Activated T-helper 2 cell treated with anti-CD3 and anti-CD28 coated beads, Interferon-gamma antibody, Interleukin-2, Interleukin-4, amounts not matched to agents 10 μg/mL and 5 μg/mL and 100 μg/mL, durations not matched to agents 14 hours and 24 hours and 36 hours (primary cell): ENCODE measurements at regions of chr14 and their contacts with region 1.

Region 1: GRCh38 chr14:60753264-60754119 is 18.9 kb downstream of the MNAT1 start:
- DNase-seq: peak; percentile 67
- H3K4me3 Mint-ChIP-seq: peak overlapping the region; percentile 37
- H3K27ac Mint-ChIP-seq: peak overlapping the region; percentile 87
- H3K4me1 Mint-ChIP-seq: peaks cover 57% of the 10 kb centered on the region
- H3K27me3 Mint-ChIP-seq: no peaks in the 10 kb centered on the region

Region 2: DNA sequence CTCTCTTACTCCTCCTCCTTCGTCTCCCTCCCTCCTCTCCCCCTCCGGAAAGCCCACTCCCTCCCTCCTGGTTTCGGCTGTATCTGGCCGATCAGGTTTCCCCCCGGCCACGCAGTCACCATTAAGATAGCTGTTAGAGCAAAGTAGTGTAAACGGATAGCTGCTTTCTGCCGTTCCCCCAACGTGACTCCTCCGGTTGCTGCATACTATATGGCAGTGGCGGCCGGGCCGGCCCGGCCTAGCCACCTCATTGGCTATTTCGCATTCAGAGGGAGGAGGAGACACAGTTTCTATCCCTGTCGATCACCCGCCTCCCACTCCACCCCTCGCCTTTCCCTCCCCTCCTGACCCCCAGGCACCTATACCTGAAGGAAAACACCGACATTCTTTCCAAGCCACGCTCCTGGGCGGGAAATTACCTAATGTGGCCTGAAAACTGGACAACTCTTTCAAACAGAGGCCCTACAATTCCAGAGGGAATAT is 29.3 kb before region 1 on chr14 and contains the start of gene SIX4:
- intact Hi-C with region 1: loop called (anchors 1 kb)
- DNase-seq: no peak
- H3K4me3 Mint-ChIP-seq: peak within 1 kb of the TSS; percentile 83
- H3K27ac Mint-ChIP-seq: peak within 1 kb of the TSS; percentile 20
- H3K4me1 Mint-ChIP-seq: peaks cover 15% of the 10 kb centered on the region
- H3K27me3 Mint-ChIP-seq: peaks cover 72% of the 10 kb centered on the region
- total RNA-seq, gene SIX4: 1.1 and 1.3 TPM in 2 replicates

Region 3: DNA sequence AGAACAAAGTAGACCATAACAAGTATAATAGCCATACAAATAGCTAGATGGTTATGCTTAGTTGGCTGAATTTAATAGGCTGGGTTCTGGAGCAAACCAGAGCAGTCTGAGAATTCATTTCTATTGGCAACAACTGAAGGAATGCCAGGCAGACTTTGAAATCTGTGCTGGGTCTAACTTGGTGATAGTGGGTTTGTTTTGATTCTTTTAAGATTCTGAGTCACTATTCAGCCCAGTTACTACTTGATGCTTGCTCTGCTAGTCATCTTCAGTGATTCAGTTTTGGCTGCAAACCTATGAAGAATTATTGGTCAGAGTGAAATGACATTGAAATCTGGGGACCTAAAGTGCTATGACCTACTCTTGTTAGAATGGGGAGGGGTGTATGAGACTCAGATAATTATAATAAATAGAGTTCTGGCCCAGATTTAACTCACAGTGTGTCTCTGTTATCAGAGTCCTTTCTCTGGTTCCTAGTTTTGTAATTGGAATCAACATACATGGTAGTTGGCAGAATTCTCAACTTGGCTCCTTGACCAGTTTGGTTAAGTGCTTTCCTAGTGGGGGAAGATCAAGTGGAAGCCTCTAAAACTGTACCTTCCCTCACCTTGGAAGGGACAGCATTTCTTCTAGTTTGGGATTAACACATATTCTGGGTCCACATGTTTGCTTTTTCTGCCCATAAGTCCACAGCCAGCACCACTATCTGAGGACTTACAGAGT is 24.5 kb after region 1 on chr14:
- intact Hi-C with region 1: loop called (anchors 1 kb)
- DNase-seq: no peak
- H3K4me3 Mint-ChIP-seq: no peak overlapping the region
- H3K27ac Mint-ChIP-seq: no peak overlapping the region
- H3K4me1 Mint-ChIP-seq: peaks cover 21% of the 10 kb centered on the region
- H3K27me3 Mint-ChIP-seq: no peaks in the 10 kb centered on the region

Region 4: DNA sequence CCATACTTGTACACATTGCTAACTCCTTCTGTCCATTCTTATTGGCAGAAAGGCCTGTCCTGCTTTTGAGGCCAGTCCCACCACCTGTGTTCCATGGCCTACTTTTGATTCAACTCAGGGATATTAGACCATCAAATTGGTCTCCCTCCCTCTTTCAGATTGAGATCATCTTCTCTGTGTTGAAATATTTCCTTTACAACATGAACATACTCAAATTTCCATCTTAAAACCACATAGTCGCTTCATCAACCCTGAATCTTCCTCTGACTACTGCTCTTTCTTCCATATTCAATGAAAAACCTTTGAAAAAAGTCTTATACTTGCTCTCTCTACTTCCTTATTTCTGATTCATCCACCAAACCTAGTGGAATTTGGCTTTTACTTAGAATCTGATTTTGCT is 192.5 kb after region 1 on chr14:
- intact Hi-C with region 1: loop called (anchors 5 kb)
- DNase-seq: no peak
- H3K4me3 Mint-ChIP-seq: no peak overlapping the region
- H3K27ac Mint-ChIP-seq: peak overlapping the region; percentile 67
- H3K4me1 Mint-ChIP-seq: peaks cover 13% of the 10 kb centered on the region
- H3K27me3 Mint-ChIP-seq: no peaks in the 10 kb centered on the region

Region 5: DNA sequence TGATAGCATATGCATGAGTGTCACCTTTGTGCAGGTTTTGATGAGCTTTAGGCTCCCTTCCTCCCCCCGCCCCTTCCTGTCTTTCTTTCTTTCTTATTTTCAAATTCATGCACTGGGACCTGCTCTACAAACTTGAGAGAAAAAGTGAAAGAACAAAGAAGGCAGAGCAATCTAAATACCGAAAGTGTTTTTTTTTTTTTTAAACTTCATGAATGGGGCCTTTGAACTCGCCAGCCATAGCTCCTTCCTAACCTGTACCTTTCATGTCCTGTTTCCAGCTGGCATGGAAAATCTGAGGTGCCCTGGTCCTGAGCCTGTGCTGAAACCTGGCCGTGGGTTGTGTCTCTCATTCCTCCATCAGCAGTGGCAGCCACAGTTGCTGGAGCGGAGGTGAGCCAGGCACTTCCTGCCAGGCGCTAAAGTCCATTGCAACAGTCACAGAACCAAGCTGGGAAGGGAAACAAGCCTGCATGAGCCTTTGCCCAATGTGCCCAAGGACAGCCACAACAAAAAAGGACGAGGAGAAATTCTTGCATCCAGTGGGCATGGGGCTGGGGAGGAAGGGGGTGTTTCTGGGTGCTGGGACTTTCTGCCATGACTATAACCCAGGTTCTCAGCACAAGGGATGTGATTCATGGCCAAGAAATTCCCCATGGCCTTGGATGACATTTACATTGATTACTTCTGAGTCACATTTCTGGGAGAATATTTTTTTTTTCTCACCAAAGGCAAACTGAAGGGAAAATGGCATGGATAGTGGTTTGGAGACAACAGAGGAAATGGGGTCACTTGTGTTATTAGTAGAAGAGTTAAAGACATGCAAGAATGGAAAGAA is 425.0 kb after region 1 on chr14:
- intact Hi-C with region 1: loop called (anchors 10 kb)
- DNase-seq: no peak
- H3K4me3 Mint-ChIP-seq: peak overlapping the region; percentile 61
- H3K27ac Mint-ChIP-seq: peak overlapping the region; percentile 87
- H3K4me1 Mint-ChIP-seq: peaks cover 53% of the 10 kb centered on the region
- H3K27me3 Mint-ChIP-seq: no peaks in the 10 kb centered on the region